ENCODE measurements at regions of chr7 and their contacts with region 1.

Region 1: GRCh38 chr7:23431702-23432199 is 38.5 kb downstream of the IGF2BP3 start:
- DNase-seq: no peak
- H3K4me3 Mint-ChIP-seq: no peak overlapping the region
- H3K27ac Mint-ChIP-seq: peak overlapping the region; percentile 12
- H3K4me1 Mint-ChIP-seq: peaks cover 21% of the 10 kb centered on the region
- H3K27me3 Mint-ChIP-seq: no peaks in the 10 kb centered on the region
- CTCF ChIP-seq: no peak

Region 2: GRCh38 chr7:23418046-23418445 is 13.7 kb before region 1 on chr7:
- CTCF ChIA-PET with region 1: interaction called, 18 read pairs
- POLR2A ChIA-PET with region 1: interaction called, 14 read pairs
- intact Hi-C with region 1: no loop called
- DNase-seq: peak; percentile 59
- H3K4me3 Mint-ChIP-seq: no peak overlapping the region
- H3K27ac Mint-ChIP-seq: peak overlapping the region; percentile 64
- H3K4me1 Mint-ChIP-seq: peaks cover 9% of the 10 kb centered on the region
- H3K27me3 Mint-ChIP-seq: no peaks in the 10 kb centered on the region
- CTCF ChIP-seq: no peak

Region 3: DNA sequence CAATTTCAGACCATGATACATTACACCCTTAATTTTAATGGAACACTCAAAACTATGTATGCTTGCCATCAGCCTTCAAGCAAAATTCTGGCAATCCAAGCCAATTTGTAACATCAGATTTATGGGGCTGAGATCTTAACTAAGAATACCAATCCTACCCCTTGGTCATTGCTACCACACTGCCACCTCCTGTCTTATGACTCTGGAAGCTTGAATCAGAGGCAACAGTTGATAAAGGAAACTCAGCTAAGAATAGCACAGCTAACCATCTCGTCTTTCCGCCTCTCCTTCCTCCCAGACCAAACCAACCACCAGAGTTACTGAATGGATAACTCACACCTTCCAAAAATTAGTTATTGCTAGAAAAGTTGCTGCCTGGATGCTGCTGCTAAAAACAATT is 31.1 kb after region 1 on chr7:
- CTCF ChIA-PET with region 1: interaction called, 32 read pairs
- POLR2A ChIA-PET with region 1: interaction called, 12 read pairs
- intact Hi-C with region 1: loop called (anchors 2 kb)
- DNase-seq: peak; percentile 20
- H3K4me3 Mint-ChIP-seq: no peak overlapping the region
- H3K27ac Mint-ChIP-seq: no peak overlapping the region
- H3K4me1 Mint-ChIP-seq: peaks cover 19% of the 10 kb centered on the region
- H3K27me3 Mint-ChIP-seq: peaks cover 13% of the 10 kb centered on the region
- CTCF ChIP-seq: no peak

Region 4: DNA sequence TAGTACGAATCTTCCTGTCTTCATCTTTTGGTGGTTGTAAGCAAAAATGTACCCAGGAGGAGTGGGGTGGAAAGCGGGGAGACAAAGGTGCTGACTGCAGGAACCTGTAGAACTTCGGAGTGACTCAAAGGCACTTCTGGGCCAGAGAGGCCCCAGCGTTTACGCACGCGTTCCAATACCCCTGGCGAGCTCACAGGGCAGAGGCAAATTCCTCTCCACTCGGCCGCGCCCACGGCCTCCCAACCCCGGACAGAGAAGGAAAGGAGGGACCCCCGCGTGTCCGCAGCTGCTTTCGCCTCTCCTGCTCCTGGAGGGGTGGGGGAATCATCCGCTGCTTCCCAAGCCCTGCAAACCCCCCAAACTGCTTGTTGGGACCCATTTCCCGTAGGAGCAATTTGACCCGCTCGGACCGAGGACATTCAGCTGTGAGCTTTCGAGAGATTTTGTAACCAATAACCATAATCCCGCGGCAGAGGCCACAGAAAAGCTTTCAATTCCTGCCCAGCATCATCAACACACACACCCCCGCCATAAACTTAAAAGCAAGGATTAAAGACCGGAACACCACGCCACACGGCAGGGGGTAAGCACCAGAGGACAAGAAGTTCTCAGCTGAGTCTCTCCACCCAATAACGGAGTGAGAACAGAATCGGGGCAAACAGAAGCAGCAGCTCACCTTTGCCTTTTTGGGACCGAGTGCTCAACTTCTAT is 36.2 kb after region 1 on chr7:
- CTCF ChIA-PET with region 1: interaction called, 32 read pairs
- POLR2A ChIA-PET with region 1: interaction called, 12 read pairs
- intact Hi-C with region 1: loop called (anchors 2 kb)
- DNase-seq: peak; percentile 41
- H3K4me3 Mint-ChIP-seq: peak overlapping the region; percentile 88
- H3K27ac Mint-ChIP-seq: peak overlapping the region; percentile 69
- H3K4me1 Mint-ChIP-seq: peaks cover 22% of the 10 kb centered on the region
- H3K27me3 Mint-ChIP-seq: peaks cover 4% of the 10 kb centered on the region
- CTCF ChIP-seq: no peak

Region 5: DNA sequence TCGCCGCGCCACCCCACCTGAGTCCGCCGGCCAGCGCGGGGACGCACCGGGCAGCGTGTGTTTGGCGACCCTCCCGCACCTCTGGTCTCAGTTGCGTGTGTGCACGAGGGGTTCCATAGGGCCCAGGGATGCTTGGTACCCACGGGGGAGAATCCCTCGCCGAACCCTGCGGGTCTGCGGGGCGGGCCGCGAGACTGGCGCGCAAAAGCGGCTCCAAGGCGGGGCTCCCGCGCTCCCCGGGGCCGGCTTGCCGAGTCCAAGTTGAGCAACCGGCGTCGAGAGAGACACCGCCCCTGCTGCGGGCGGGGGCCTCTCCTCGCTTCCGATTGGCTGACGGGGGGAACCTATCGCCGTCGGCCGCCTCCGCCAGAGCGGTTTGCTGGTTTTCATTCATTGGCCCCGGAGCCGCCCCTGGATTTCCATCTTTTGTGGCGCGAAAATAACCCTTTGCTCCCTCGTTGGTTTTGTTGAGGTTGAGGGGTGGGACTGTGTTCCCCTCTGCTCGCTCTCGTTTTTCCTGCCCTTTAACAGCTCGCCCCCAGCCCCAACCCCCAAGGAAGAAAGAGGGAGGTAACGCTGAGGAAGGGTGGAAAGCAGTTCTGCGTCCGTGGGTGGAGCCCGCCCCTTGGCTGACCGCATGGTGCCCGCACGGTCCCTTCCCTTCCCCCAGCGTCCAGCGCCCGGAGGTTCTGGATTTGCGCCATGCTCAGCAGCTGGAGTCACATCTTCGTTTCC is 42.5 kb after region 1 on chr7:
- CTCF ChIA-PET with region 1: interaction called, 4 read pairs
- POLR2A ChIA-PET with region 1: interaction called, 12 read pairs
- intact Hi-C with region 1: loop called (anchors 2 kb)
- DNase-seq: peak; percentile 88
- H3K4me3 Mint-ChIP-seq: peak overlapping the region; percentile 64
- H3K27ac Mint-ChIP-seq: no peak overlapping the region
- H3K4me1 Mint-ChIP-seq: peaks cover 6% of the 10 kb centered on the region
- H3K27me3 Mint-ChIP-seq: peaks cover 64% of the 10 kb centered on the region
- CTCF ChIP-seq: no peak

Region 6: DNA sequence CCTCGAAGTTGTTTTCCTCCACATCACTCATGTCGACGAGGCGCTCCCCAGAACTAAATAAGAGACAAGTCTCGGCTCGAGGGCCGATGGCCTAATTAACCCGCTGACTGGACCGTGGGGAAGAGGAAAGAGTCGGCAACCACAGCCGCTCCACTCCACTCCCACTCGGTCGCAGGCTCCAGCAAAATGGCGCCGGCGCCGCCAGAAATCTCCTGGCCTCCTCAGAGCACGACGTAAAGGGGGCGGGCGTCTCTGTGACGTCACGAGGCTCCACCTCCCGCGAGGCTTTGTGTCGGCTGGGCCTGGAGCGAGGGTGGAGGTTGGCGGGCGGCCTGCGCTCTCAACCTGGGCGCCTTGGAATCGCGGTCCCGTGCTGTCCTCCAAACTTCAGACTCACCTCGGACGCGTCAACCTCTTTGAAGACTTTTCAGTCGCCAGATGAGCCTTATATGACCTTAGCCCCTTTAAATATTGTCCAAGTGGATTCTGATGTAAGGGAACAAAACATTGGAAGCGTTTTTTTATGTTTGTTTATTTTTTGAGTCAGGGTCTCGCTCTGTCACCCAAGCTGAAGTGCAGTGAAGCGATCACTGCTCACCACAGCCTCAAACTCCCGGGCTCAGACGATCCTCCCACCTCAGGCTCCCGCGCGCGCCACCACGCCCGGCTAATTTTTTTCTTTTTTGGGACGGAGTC is 100.2 kb after region 1 on chr7 and contains the start of gene TRA2A:
- CTCF ChIA-PET with region 1: interaction called, 3 read pairs
- POLR2A ChIA-PET with region 1: interaction called, 8 read pairs
- intact Hi-C with region 1: loop called (anchors 5 kb)
- DNase-seq: peak; percentile 96
- H3K4me3 Mint-ChIP-seq: peak within 1 kb of the TSS; percentile 95
- H3K27ac Mint-ChIP-seq: peak within 1 kb of the TSS; percentile 100
- H3K4me1 Mint-ChIP-seq: peaks cover 17% of the 10 kb centered on the region
- H3K27me3 Mint-ChIP-seq: no peaks in the 10 kb centered on the region
- CTCF ChIP-seq: no peak
- total RNA-seq, gene TRA2A: 92.9 and 113 TPM in 2 replicates

Measured in MCF 10A (cell line).